Activated naive CD4-positive, alpha-beta T cell treated with anti-CD3 and anti-CD28 coated beads for 36 hours (primary cell): ENCODE measurements at regions of chr19 and their contacts with region 1.

Region 1: DNA sequence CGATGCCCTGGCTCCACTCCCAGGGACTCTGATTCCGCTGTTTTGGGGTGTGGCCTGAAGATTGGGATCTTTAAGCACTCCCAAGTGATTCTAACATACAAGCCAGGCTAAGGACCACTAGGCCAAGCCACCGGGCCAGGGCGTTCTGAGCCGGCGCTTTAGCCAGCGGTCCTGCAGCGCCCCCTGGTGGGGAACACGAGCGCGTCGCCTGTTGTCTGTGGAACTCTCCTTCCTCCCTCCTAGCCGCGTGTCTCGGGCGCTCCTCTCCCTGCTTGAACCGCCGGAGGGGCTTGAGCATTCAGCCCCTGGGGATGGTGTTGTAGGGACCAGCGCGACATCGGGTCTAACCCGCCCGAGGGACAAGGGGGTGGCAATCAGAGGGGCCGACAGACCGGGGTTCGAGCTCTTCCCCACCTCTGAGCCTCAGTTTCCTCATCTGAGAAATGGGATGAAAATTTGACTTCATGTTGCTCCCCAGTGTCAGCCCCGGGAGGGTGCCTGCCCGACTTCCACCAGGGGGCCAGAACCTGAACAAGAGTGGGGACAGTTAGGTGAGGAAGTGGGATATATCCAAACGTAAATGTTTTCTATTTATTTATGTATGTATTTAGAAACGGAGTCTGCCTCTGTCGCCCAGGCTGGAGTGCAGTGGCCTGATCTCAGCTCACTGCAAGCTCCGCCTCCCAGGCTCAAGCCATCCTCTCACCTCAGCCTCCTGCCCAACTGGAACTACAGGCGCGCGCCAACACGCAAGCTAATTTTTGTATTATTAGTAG is 18.0 kb upstream of the PNMA8B start:
- DNase-seq: peak; percentile 86
- H3K4me3 Mint-ChIP-seq: no peak overlapping the region
- H3K27ac Mint-ChIP-seq: no peak overlapping the region
- H3K4me1 Mint-ChIP-seq: peaks cover 8% of the 10 kb centered on the region
- H3K27me3 Mint-ChIP-seq: peaks cover 2% of the 10 kb centered on the region

Region 2: GRCh38 chr19:46283771-46284170 is 229.9 kb before region 1 on chr19:
- CTCF ChIA-PET with region 1: no interaction called
- intact Hi-C with region 1: loop called (anchors 1 kb)
- DNase-seq: no peak
- H3K4me3 Mint-ChIP-seq: no peak overlapping the region
- H3K27ac Mint-ChIP-seq: no peak overlapping the region
- H3K4me1 Mint-ChIP-seq: no peaks in the 10 kb centered on the region
- H3K27me3 Mint-ChIP-seq: peaks cover 5% of the 10 kb centered on the region

Region 3: DNA sequence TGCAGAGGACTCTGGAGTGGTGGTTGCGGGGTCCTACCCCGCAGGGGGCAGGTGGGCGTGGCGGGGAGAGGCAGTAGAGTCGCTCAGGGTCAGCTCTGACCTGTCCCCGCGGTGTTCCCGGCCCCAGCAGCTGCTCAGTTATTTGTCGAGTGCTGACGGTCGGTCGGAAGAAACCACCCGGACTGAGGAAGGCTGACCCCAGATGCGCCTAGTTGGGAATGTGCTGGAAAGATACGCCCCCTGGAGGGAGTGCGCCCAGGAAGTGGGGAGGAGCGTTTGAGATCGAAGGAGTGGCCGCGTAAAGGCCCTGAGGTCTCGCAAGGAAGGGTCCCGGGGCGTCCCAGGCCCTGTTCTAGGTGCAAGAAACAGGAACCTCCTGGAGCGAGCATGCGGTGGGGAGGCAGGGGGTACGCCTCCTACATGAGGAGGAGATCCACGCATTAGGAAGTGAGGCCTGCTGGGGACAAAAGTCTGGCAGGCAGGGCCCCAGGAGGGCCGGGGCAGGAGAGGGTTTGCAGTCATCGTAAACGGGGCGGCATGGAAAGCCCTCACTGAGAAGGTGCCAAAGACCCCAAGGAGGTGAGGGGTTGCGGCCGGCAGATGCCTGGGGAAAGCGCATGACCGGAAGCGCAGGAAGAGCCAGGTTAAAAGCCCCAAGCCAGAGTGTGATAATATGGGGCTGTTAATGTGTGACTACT is 109.4 kb before region 1 on chr19:
- CTCF ChIA-PET with region 1: interaction called, 9 read pairs
- intact Hi-C with region 1: loop called (anchors 1 kb)
- DNase-seq: no peak
- H3K4me3 Mint-ChIP-seq: peak overlapping the region; percentile 54
- H3K27ac Mint-ChIP-seq: no peak overlapping the region
- H3K4me1 Mint-ChIP-seq: peaks cover 17% of the 10 kb centered on the region
- H3K27me3 Mint-ChIP-seq: peaks cover 63% of the 10 kb centered on the region

Region 4: GRCh38 chr19:46529622-46530462 is 16.2 kb after region 1 on chr19:
- CTCF ChIA-PET with region 1: interaction called, 88 read pairs
- intact Hi-C with region 1: no loop called
- DNase-seq: peak; percentile 84
- H3K4me3 Mint-ChIP-seq: no peak overlapping the region
- H3K27ac Mint-ChIP-seq: peak overlapping the region; percentile 30
- H3K4me1 Mint-ChIP-seq: peaks cover 27% of the 10 kb centered on the region
- H3K27me3 Mint-ChIP-seq: no peaks in the 10 kb centered on the region

Region 5: DNA sequence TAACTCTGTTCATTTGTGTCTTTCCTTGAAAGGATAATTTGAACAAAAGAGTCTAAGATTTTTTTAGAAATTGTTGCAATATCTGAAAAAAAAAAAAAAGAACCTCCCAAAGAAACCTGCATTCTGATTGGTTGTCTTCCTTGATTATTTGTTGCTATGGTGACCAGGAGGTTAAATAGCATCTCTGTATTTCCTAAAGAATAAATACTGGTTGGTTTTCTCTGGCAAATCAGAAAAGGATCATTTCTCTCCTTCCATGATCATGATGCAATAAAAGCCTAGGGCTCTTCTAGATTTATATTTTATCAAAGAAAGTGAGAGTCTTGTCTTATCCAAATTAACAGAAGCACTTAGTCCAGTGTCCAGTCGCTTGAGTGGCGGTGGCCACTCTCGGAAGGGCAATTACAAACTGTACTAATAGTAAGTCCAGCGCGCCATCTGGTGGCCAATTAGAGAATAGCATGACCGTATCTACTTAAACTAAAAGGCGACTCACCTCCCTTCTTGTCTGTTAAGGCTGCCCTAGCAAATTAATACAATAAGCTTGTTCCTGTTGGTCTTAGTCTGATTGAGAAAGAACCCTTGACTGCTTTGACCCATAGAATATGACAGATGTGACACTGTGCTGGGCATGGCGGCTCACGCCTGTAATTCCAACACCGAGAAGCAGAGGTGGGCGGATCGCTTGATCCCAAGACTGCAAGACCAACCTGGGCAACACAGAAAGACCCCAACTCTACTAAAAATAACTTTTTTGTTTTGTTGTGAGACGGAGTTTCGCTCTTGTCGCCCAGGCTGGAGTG is 29.0 kb after region 1 on chr19:
- CTCF ChIA-PET with region 1: interaction called, 203 read pairs
- intact Hi-C with region 1: loop called (anchors 1 kb)
- DNase-seq: peak; percentile 92
- H3K4me3 Mint-ChIP-seq: no peak overlapping the region
- H3K27ac Mint-ChIP-seq: no peak overlapping the region
- H3K4me1 Mint-ChIP-seq: peaks cover 11% of the 10 kb centered on the region
- H3K27me3 Mint-ChIP-seq: no peaks in the 10 kb centered on the region